HEK293 (cell line): ENCODE measurements at regions of chr7 and their contacts with region 1.

Region 1: DNA sequence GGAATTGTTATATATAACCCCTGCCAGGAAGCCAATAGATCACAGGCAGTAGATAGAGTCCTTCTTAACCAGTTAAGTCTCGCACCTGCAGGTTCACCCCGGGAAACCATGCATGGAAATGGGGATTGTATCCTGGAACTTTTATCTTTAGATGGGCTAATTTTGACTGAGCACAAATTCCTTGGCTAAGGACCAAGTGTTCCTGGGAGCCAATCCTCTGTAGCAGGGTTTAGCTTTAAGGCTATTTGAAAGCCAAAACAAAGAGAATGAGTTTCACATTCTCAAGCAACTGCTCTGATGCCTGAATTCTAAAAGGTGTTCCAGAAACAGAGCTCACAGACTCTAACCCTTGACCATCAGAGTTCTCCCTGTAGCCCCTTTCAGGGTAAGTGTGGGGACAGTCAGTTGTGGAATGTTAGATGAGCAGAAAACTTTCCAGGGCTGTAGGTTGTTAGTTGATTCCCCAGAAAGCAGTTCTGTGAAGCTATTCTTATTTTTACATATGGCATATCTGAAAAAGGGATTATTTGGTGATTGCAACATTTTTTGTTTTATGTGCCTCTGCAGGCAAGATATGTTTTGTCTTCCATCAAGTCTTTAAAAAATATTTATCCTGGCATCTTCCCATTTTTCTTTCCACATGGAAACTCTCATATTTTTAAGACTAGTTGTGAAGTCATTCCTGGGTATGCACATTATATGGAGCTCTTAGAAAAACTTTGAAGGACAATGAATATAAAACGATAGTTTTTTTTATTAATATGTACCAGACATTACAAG is 16.2 kb upstream of the NPVF start:
- H3K4me3 ChIP-seq: no peak overlapping the region
- H3K27ac ChIP-seq: no peak overlapping the region
- H3K4me1 ChIP-seq: no peaks in the 10 kb centered on the region
- CTCF ChIP-seq: no peak

Region 2: DNA sequence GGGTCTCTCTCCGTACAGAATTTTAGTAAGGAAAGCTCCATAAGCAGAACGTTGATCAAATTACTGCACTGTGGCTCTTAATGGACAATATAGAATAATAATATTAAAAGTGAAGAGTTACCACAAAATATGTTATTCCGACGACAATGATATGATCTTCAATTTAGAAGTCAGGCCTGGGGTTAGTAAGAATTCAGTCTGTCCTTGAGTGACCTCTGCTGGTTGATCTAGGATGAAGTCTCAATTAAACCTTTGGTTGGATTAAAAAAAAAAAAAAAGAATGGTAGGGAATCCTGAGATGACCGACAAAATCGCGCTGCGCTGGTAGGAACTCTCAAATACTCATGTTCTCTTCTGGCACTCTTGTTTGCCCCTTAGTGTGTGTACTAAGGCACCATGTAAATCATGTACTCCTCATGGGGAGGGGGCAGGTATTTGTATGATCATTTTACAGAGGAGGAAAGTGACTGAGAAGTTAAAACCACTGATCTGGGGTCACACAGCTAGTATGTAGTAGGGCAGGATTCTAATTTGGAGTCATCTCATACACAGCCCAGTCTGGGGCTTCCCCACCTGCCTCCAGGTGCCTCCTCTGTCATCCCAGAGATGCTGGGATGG is 145.2 kb after region 1 on chr7:
- CTCF ChIA-PET with region 1: interaction called, 12 read pairs
- POLR2A ChIA-PET with region 1: no interaction called
- H3K4me3 ChIP-seq: no peak overlapping the region
- H3K27ac ChIP-seq: no peak overlapping the region
- H3K4me1 ChIP-seq: peaks cover 2% of the 10 kb centered on the region; the same call in 1 of the 2 replicates
- CTCF ChIP-seq: peak; percentile 28; the same call in 1 of the 2 replicates

Region 3: GRCh38 chr7:25565949-25566348 is 321.5 kb after region 1 on chr7:
- CTCF ChIA-PET with region 1: no interaction called
- POLR2A ChIA-PET with region 1: no interaction called
- H3K4me3 ChIP-seq: no peak overlapping the region
- H3K27ac ChIP-seq: no peak overlapping the region
- H3K4me1 ChIP-seq: no peaks in the 10 kb centered on the region
- CTCF ChIP-seq: peak; percentile 92